WTC11 (cell line): ENCODE measurements at regions of chr15 and their contacts with region 1.

Region 1: DNA sequence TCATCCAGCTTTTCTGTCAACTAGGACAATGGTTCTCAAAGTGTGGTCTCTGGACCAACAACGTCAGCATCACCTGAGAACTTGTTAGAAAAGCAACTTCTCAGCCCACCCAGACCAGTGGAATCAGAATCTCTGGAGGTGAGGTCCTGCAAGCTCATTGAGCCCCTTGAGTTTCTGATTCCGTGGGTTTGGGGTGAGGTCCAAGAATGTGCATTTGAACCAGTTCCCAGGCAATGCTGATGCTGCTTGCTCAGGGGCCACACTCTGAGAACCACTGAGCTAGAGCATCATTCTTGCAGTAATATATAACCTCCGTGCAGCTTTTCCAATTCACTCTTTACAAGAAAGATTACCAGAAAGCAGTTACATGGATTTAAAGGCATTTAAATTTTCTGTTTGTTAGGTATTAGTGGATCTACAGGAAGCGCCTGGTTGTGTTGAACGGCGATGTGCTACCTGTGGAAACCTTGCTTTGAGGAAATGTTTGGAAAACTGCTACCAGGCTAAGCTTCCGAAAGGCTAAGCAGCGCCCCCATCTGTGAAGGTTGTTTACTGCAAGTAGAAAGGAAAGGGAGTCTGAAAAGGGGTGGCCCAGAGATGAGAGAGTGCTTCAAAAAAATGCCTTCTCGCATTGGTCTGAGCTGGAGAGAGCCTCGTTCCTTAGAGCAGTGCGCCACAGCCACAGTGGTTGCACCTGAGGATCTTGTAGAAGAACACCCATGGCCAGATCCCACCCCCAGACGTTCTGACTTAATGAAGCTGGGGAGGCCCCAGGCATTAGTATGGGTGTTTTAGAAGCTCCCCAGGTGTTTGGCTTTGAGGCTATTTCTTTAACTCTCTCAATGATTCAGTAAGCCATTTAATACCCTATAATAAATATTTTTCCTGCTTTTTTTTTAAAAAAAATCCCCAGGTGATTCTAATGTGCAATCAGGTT is 50.0 kb downstream of the RLBP1 start:
- DNase-seq: peak; percentile 83
- ATAC-seq: peak; percentile 95
- H3K4me3 Mint-ChIP-seq: no peak overlapping the region
- H3K27ac Mint-ChIP-seq: peak overlapping the region; percentile 32; the same call in 1 of the 2 replicates
- H3K4me1 Mint-ChIP-seq: peaks cover 7% of the 10 kb centered on the region
- H3K27me3 Mint-ChIP-seq: no peaks in the 10 kb centered on the region
- CTCF ChIP-seq: peak; percentile 76

Region 2: GRCh38 chr15:88897456-88898194 is 273.8 kb before region 1 on chr15:
- CTCF ChIA-PET with region 1: interaction called, 14 read pairs
- POLR2A ChIA-PET with region 1: no interaction called
- DNase-seq: peak; percentile 53
- ATAC-seq: 0 out of 2 replicates have a peak, but pooled peaks have one; percentile 1
- H3K4me3 Mint-ChIP-seq: no peak overlapping the region; the same call in 1 of the 2 replicates
- H3K27ac Mint-ChIP-seq: peak overlapping the region; percentile 93
- H3K4me1 Mint-ChIP-seq: peaks cover 53% of the 10 kb centered on the region
- H3K27me3 Mint-ChIP-seq: 0 out of 2 replicates have a peak, but pooled peaks cover 2% of the 10 kb centered on the region
- CTCF ChIP-seq: no peak

Region 3: GRCh38 chr15:88982304-88982945 is 189.0 kb before region 1 on chr15:
- CTCF ChIA-PET with region 1: no interaction called
- POLR2A ChIA-PET with region 1: no interaction called
- DNase-seq: no peak
- ATAC-seq: no peak
- H3K4me3 Mint-ChIP-seq: no peak overlapping the region
- H3K27ac Mint-ChIP-seq: no peak overlapping the region
- H3K4me1 Mint-ChIP-seq: peaks cover 60% of the 10 kb centered on the region
- H3K27me3 Mint-ChIP-seq: no peaks in the 10 kb centered on the region
- CTCF ChIP-seq: no peak

Region 4: DNA sequence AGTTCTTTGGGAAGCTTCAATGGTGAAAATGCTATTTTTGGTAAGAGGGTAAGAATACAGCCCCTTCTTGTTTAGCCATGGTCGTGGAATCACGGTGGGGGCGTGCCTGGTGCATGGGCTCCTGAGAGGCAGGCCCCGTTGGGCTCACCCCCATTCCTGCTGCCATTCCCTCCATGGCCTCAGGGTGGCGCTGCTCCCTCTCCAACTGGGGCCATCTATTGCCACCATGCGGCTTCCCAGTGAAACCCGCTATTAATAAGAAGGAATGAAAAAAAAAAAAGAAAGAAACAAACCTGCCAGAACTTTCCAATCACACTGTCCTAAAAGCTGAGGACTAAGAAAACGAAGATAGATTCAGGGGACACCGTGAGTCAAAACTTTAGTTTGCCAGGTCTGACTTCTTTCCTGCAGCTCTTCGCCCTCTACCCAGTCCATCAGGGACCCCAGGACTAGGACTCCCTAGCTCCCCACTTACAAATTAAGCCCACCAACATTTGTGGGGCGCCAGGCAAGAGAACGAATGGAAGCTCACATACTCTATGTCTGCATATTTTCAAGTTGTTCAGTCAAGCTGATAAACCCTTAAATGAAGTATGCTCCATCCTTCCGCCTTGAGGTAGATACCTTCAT is 113.8 kb before region 1 on chr15:
- CTCF ChIA-PET with region 1: interaction called, 52 read pairs
- POLR2A ChIA-PET with region 1: no interaction called
- DNase-seq: peak; percentile 95
- ATAC-seq: peak; percentile 94
- H3K4me3 Mint-ChIP-seq: no peak overlapping the region
- H3K27ac Mint-ChIP-seq: peak overlapping the region; percentile 45
- H3K4me1 Mint-ChIP-seq: peaks cover 11% of the 10 kb centered on the region
- H3K27me3 Mint-ChIP-seq: no peaks in the 10 kb centered on the region
- CTCF ChIP-seq: peak; percentile 100

Region 5: GRCh38 chr15:89101302-89102191 is 69.9 kb before region 1 on chr15:
- CTCF ChIA-PET with region 1: interaction called, 12 read pairs
- POLR2A ChIA-PET with region 1: no interaction called
- DNase-seq: no peak
- ATAC-seq: no peak
- H3K4me3 Mint-ChIP-seq: no peak overlapping the region
- H3K27ac Mint-ChIP-seq: no peak overlapping the region
- H3K4me1 Mint-ChIP-seq: peaks cover 20% of the 10 kb centered on the region
- H3K27me3 Mint-ChIP-seq: no peaks in the 10 kb centered on the region
- CTCF ChIP-seq: no peak

Region 6: GRCh38 chr15:89139400-89140166 is 31.8 kb before region 1 on chr15:
- CTCF ChIA-PET with region 1: interaction called, 11 read pairs
- POLR2A ChIA-PET with region 1: no interaction called
- DNase-seq: peak; percentile 22
- ATAC-seq: peak; percentile 59
- H3K4me3 Mint-ChIP-seq: no peak overlapping the region
- H3K27ac Mint-ChIP-seq: no peak overlapping the region
- H3K4me1 Mint-ChIP-seq: peaks cover 9% of the 10 kb centered on the region
- H3K27me3 Mint-ChIP-seq: no peaks in the 10 kb centered on the region
- CTCF ChIP-seq: no peak

Region 7: DNA sequence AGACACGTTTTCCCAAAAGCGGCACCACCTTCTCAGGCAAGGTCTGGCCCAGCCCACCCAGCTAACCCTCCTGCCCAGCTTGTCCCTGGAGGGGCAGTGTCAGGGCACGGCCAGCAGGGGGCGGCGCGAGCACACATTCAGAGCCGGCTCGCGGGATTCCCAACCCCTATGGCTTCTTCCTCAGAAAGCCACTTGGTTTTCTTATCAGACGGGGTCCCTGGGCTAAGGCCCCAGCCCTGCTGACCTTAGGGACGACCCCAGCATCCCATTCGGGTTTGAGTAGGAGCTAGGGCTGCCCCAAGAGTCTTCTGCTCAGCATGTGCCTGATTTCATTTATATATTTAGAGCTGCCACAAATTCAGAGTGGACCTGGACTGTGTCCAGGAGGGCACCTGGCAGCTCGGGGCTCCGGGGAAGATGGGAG is 35.5 kb after region 1 on chr15:
- CTCF ChIA-PET with region 1: interaction called, 16 read pairs
- POLR2A ChIA-PET with region 1: no interaction called
- DNase-seq: peak; percentile 90
- ATAC-seq: peak; percentile 98
- H3K4me3 Mint-ChIP-seq: no peak overlapping the region
- H3K27ac Mint-ChIP-seq: no peak overlapping the region
- H3K4me1 Mint-ChIP-seq: peaks cover 10% of the 10 kb centered on the region
- H3K27me3 Mint-ChIP-seq: no peaks in the 10 kb centered on the region; the same call in 1 of the 2 replicates
- CTCF ChIP-seq: peak; percentile 98

Region 8: DNA sequence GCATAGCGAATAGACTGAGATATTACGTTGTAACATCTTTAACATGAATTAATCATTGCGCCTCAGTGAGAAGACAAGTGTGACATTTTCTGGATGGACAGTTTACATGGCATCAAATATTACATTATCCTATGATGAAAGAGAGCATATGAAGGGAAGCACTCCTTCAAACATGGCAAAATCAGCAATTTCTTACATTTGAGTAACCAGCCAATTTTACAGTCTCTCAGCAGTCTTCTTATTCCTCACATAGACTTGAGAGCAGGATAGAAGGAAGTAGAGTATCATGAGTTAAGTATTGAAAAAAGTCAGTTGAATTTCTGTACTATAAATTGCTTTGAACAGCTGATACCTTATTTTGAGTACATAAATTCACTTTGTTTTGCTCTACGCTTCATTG is 111.2 kb after region 1 on chr15:
- CTCF ChIA-PET with region 1: no interaction called
- POLR2A ChIA-PET with region 1: no interaction called
- DNase-seq: no peak
- ATAC-seq: no peak
- H3K4me3 Mint-ChIP-seq: no peak overlapping the region
- H3K27ac Mint-ChIP-seq: no peak overlapping the region
- H3K4me1 Mint-ChIP-seq: no peaks in the 10 kb centered on the region
- H3K27me3 Mint-ChIP-seq: no peaks in the 10 kb centered on the region
- CTCF ChIP-seq: no peak